ENCODE measurements at regions of chr16 and their contacts with region 1.

Region 1: DNA sequence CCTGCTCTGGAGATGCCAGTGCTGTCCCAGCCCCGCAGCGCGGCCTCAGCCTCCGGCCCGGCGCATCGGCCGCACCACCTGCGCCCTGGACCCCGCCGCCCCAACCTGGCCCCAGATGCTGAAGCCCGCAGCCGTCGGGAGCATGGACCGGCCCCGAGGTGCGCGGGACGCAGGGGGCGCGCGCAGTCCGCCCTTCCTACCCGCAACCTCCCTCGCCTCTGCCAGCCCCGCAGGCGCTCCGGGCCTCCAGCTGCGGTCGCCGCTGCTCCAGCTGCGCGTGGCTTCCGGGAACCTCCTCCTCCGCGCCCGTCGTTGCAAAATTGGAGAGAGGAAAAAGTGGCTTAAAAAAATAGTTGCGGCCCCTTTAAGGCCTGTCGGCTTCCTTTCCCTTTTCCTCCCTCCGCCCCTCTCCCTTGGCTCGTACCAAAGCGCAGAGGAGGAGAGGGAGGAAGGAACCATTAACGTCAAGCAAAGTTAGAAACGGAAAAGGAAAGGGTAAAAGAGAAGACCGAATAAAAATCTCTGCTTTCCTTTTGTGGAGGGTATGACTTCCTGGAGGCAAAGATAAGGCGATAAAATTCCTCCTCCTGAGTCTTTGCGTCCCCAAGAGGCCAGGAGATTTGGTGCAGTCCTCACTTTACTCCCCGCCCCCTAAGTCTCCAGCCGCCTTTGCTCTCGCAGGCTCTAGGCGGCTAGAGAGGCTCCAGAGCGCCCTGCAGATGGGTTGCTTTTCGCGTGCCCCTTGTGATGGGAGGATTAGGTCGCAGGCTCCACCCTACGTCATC is at the start of gene CDIPT:
- DNase-seq: peak; percentile 92 to 96 (median 94)
- H3K4me3 ChIP-seq: peak within 1 kb of the TSS; percentile 66 to 98 (median 75)
- H3K4me3 Mint-ChIP-seq: peak within 1 kb of the TSS; percentile 94 to 98
- H3K27ac ChIP-seq: peak within 1 kb of the TSS; percentile 65 to 100
- H3K27ac Mint-ChIP-seq: peak within 1 kb of the TSS; percentile 93 to 100 (median 100)
- H3K4me1 ChIP-seq: peaks cover 13 to 24% of the 10 kb centered on the region in 2 donors
- H3K4me1 Mint-ChIP-seq: peaks cover 23% of the 10 kb centered on the region
- H3K27me3 ChIP-seq: no peaks in the 10 kb centered on the region
- H3K27me3 Mint-ChIP-seq: peaks cover 0 to 14% (median 0%) of the 10 kb centered on the region in 3 donors
- CTCF ChIP-seq: peak; percentile 40
- polyA plus RNA-seq, gene CDIPT: 67.2 to 98.8 (median 93.5) TPM

Region 2: DNA sequence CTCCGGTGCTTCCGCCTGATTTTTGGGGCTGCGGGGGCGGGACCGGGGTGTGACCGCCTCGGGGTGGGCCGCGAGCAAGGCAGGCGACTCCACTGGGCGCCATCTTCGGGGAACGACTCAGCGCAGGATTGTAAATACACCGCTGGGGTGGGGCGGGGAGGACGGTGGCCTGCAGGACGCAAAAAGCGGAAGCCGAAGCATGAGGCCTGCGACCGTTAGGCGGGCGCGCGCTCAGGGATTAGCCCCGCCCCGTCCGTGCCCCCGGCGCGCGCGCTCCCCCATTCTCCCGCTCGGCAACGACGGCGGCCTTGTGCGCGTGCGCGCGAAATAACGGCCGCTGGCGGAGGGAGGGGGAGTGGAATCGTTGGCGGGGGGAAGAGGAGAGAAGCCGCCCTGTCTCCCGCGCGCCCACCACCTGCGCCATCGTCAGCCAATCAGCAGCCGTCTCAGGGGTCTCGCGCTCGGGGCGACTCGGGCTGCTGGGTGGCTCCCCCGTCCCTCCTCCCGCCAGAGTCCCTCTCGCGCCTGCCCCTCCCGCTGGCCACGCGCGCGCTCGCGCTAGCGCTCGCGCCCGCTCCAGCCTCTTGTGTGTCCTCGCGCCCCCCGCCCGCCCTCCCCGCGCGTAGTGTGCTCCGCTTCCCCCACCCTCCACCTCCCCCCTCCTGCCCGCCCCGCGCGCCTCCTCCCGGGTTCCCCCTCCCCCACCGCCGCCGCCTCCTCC is 57.5 kb before region 1 on chr16:
- intact Hi-C with region 1: loop called in 1 of 2 experiments (anchors 2 kb)
- DNase-seq: peak; percentile 96 to 98 (median 97)
- H3K4me3 ChIP-seq: peak overlapping the region; percentile 55 to 88 (median 79)
- H3K4me3 Mint-ChIP-seq: peak overlapping the region; percentile 99
- H3K27ac ChIP-seq: peak overlapping the region; percentile 69 to 86
- H3K27ac Mint-ChIP-seq: peak overlapping the region; percentile 95 to 99 (median 97)
- H3K4me1 ChIP-seq: peaks cover 45 to 53% of the 10 kb centered on the region in 2 donors
- H3K4me1 Mint-ChIP-seq: peaks cover 39% of the 10 kb centered on the region
- H3K27me3 ChIP-seq: no peaks in the 10 kb centered on the region
- H3K27me3 Mint-ChIP-seq: peaks cover 0 to 4% (median 2%) of the 10 kb centered on the region in 3 donors
- CTCF ChIP-seq: no peak

Region 3: DNA sequence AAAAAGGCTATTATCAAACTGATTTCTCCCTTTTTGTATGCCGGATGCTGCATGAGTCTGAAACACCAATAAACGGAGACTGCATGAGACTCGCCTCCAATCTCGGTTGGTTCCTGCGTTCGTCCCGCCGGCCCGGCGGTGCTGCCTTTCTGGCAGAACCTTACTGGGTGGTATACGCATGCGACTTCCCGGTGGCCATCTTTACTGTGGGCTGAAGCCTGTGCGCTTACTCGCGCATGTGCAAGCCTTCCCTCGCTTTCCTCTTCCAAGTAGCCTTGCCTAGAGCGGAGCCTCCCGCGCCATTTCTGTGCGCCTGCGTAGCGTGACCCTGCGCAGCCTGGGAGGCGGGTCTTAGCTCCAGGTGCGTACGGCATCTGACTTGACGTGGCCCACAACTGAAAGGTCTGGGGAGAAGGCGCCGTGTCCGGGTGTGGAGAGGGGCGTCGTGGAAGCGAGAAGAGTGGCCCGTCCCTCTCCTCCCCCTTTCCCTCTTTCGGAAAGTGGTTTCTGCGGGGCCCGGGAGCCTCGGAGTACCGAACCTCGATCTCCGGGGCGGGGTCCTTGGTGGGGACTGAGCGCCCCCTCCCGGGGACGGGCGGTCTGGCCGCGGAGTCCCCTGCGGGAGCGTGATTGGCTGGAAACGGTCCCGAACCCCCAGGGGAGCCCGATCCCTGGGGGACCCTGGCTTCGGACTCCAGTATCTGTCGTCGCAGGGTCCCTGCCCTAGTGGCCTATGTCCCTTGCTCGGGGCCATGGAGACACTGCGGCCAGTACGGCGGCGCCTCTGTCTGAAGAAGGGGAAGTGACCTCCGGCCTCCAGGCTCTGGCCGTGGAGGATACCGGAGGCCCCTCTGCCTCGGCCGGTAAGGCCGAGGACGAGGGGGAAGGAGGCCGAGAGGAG is 47.0 kb before region 1 on chr16 and contains the start of gene PAGR1:
- intact Hi-C with region 1: loop called (anchors 5 kb)
- DNase-seq: peak; percentile 99
- H3K4me3 ChIP-seq: peak within 1 kb of the TSS; percentile 64 to 88 (median 74)
- H3K4me3 Mint-ChIP-seq: peak within 1 kb of the TSS; percentile 95 to 96
- H3K27ac ChIP-seq: peak within 1 kb of the TSS; percentile 73 to 83
- H3K27ac Mint-ChIP-seq: peak within 1 kb of the TSS; percentile 91 to 98 (median 96)
- H3K4me1 ChIP-seq: peaks cover 54 to 75% of the 10 kb centered on the region in 2 donors
- H3K4me1 Mint-ChIP-seq: peaks cover 67% of the 10 kb centered on the region
- H3K27me3 ChIP-seq: peaks cover 5 to 24% of the 10 kb centered on the region in 2 donors
- H3K27me3 Mint-ChIP-seq: peaks cover 21 to 32% (median 31%) of the 10 kb centered on the region in 3 donors
- CTCF ChIP-seq: peak; percentile 92
- polyA plus RNA-seq, gene PAGR1: 12.6 to 43.4 (median 36.3) TPM

Region 4: DNA sequence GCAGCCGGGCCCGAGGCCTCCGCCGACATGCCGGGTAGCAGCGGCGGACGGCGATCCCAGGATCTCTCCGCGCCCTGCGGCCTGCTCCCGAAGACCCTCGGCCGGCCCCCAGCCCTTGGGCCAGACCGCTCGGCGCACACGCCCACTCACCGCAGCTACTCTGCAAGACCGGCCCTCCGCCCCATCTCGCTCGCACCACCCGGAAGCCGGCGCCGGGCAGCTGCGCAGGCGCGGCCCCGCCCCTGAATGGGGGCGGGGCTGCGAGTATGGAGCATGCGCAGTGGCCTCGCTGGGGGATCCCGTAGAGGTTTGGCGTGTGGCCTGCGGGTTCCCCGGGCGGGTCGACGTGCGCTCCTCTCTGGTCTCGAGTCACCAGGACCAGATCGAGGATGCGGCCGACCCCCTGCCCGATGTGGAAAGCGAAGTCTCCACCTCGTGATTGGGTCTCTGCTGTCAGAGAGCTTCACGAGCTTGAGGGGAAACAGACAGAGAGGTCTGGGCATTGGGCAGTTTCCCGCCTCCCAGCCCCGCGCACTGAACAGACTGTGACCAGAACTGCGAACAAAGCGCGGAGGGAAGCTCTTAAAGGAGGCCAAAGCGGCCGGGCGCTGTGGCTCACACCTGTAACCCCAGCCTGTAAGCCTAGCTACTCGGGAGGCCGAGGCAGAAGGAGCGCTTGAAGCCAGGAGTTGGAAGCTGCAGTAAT is 63.1 kb after region 1 on chr16 and contains the start of gene KCTD13:
- intact Hi-C with region 1: loop called in 1 of 2 experiments (anchors 10 kb)
- DNase-seq: peak; percentile 73 to 78 (median 77)
- H3K4me3 ChIP-seq: peak within 1 kb of the TSS; percentile 77 to 94 (median 87)
- H3K4me3 Mint-ChIP-seq: peak within 1 kb of the TSS; percentile 93 to 98
- H3K27ac ChIP-seq: peak within 1 kb of the TSS; percentile 62 to 77
- H3K27ac Mint-ChIP-seq: peak within 1 kb of the TSS; percentile 88 to 95 (median 93)
- H3K4me1 ChIP-seq: peaks cover 16 to 23% of the 10 kb centered on the region in 2 donors
- H3K4me1 Mint-ChIP-seq: peaks cover 29% of the 10 kb centered on the region
- H3K27me3 ChIP-seq: no peaks in the 10 kb centered on the region
- H3K27me3 Mint-ChIP-seq: peaks cover 0 to 3% (median 0%) of the 10 kb centered on the region in 3 donors
- CTCF ChIP-seq: no peak
- polyA plus RNA-seq, gene KCTD13: 4.0 to 36.6 (median 4.7) TPM

Region 5: DNA sequence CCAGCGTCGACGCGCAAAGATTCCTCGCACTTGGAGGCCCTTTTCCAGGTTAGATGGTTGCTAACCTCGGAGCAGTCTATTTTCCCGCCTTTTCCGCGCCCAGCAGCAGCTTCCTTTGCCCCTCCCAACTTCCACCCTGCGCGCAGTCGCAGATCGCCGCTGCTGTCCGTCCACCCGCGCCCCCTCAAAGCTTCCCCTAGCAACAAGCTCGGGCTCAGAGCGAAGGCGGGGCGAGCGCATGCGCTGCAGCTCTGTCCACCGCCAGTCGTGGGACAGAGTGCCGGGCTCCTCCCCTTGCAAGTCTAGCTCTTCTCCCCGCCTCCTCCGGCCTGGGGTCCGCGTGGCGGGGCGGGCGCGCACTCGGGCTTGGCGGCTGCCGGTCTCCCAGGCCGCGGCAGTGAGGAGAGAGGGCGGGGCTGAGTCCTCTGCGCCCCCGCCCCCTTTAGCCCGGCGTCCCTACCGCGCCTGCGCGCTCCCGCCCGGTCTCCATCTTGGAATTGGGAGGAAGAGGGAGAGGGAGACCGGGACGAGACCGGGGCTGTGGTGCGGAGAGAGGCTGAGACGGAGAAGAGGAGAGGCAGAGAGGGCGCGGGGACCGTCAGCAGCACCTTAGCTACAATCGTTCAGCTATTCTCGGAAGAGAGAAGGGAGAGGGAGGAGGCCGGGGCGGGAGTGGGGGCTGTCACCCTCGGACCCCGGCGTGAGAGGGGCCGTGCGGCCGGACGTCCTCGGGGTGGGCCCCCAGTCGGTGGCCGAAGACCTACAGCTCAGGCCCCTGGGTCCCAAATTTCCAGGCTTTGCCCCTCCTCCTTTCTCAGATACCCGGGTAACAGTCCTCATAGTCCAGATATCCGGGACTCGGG is 110.5 kb after region 1 on chr16 and contains the start of gene TAOK2:
- intact Hi-C with region 1: loop called in 1 of 2 experiments (anchors 10 kb)
- DNase-seq: peak; percentile 97 to 99 (median 98)
- H3K4me3 ChIP-seq: peak within 1 kb of the TSS; percentile 79 to 100 (median 98)
- H3K4me3 Mint-ChIP-seq: peak within 1 kb of the TSS; percentile 91 to 94
- H3K27ac ChIP-seq: peak within 1 kb of the TSS; percentile 63 to 77
- H3K27ac Mint-ChIP-seq: peak within 1 kb of the TSS; percentile 82 to 96 (median 93)
- H3K4me1 ChIP-seq: peaks cover 31 to 43% of the 10 kb centered on the region in 2 donors
- H3K4me1 Mint-ChIP-seq: peaks cover 38% of the 10 kb centered on the region
- H3K27me3 ChIP-seq: no peaks in the 10 kb centered on the region
- H3K27me3 Mint-ChIP-seq: peaks cover 0 to 5% (median 2%) of the 10 kb centered on the region in 3 donors
- CTCF ChIP-seq: no peak
- polyA plus RNA-seq, gene TAOK2: 1.1 to 19.2 (median 2.3) TPM